Activated CD8-positive, alpha-beta T cell treated with anti-CD3 and anti-CD28 coated beads for 36 hours (primary cell): ENCODE measurements at regions of chr5 and their contacts with region 1.

Region 1: GRCh38 chr5:59390074-59390659 is 503.4 kb downstream of the PDE4D start:
- DNase-seq: peak; percentile 19
- ATAC-seq: no peak
- H3K4me3 Mint-ChIP-seq: no peak overlapping the region
- H3K27ac Mint-ChIP-seq: no peak overlapping the region
- H3K4me1 Mint-ChIP-seq: no peaks in the 10 kb centered on the region
- H3K27me3 Mint-ChIP-seq: peaks cover 4% of the 10 kb centered on the region
- CTCF ChIP-seq: peak; percentile 93

Region 2: GRCh38 chr5:59496524-59497134 is 106.5 kb after region 1 on chr5:
- CTCF ChIA-PET with region 1: interaction called, 8 read pairs
- POLR2A ChIA-PET with region 1: no interaction called
- intact Hi-C with region 1: loop called (anchors 2 kb)
- DNase-seq: peak; percentile 11
- ATAC-seq: peak; percentile 67
- H3K4me3 Mint-ChIP-seq: no peak overlapping the region
- H3K27ac Mint-ChIP-seq: no peak overlapping the region
- H3K4me1 Mint-ChIP-seq: no peaks in the 10 kb centered on the region
- H3K27me3 Mint-ChIP-seq: peaks cover 8% of the 10 kb centered on the region
- CTCF ChIP-seq: peak; percentile 50